ENCODE measurements at regions of chr18 and their contacts with region 1.

Region 1: GRCh38 chr18:59994357-59994756 is 94.6 kb downstream of the PMAIP1 start:
- DNase-seq: no peak
- H3K4me3 ChIP-seq: no peak overlapping the region
- H3K27ac ChIP-seq: no peak overlapping the region
- H3K4me1 ChIP-seq: no peaks in the 10 kb centered on the region
- H3K27me3 ChIP-seq: no peaks in the 10 kb centered on the region
- CTCF ChIP-seq: no peak
- POLR2A ChIP-seq: no peak

Region 2: GRCh38 chr18:59885579-59886163 is 108.7 kb before region 1 on chr18:
- intact Hi-C with region 1: no loop called
- DNase-seq: no peak
- H3K4me3 ChIP-seq: no peak overlapping the region
- H3K27ac ChIP-seq: no peak overlapping the region
- H3K4me1 ChIP-seq: peaks cover 0 to 5% of the 10 kb centered on the region in 2 donors
- H3K27me3 ChIP-seq: no peaks in the 10 kb centered on the region
- CTCF ChIP-seq: no peak
- POLR2A ChIP-seq: no peak

Region 3: GRCh38 chr18:60554967-60555366 is 560.6 kb after region 1 on chr18:
- intact Hi-C with region 1: loop called (anchors 5 kb)
- DNase-seq: no peak
- H3K4me3 ChIP-seq: no peak overlapping the region
- H3K27ac ChIP-seq: no peak overlapping the region
- H3K4me1 ChIP-seq: no peaks in the 10 kb centered on the region
- H3K27me3 ChIP-seq: no peaks in the 10 kb centered on the region
- CTCF ChIP-seq: no peak
- POLR2A ChIP-seq: no peak

Measured in thyroid gland (tissue), 4 donors.